ENCODE measurements at regions of chrX and their contacts with region 1.

Region 1: GRCh38 chrX:94612131-94612530 is 938.1 kb downstream of the FAM133A start:
- DNase-seq: no peak
- ATAC-seq: no peak
- H3K4me3 ChIP-seq: no peak overlapping the region
- H3K27ac ChIP-seq: no peak overlapping the region
- H3K4me1 ChIP-seq: no peaks in the 10 kb centered on the region
- H3K27me3 ChIP-seq: no peaks in the 10 kb centered on the region

Region 2: DNA sequence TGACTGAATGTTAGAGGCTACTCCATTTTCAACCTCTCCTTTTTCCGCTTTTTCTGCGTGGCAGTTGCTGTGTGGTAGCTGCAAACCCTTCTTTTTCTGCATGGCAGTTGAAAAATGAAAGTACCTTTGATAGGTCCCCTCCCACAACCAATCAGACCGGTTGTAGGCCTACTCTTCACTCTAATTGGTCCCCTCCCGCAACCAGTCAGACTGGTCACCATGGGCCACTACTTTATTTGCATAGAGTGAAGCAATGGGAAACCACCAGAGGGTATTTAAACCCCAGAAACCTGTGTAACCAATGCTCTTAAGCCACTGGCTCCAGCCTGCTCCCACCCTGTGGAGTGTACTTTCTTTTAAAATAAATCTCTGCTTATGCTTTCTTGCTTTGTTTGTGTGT is 60.3 kb before region 1 on chrX:
- intact Hi-C with region 1: no loop called
- DNase-seq: no peak
- ATAC-seq: no peak
- H3K4me3 ChIP-seq: no peak overlapping the region
- H3K27ac ChIP-seq: no peak overlapping the region
- H3K4me1 ChIP-seq: no peaks in the 10 kb centered on the region
- H3K27me3 ChIP-seq: no peaks in the 10 kb centered on the region

Region 3: DNA sequence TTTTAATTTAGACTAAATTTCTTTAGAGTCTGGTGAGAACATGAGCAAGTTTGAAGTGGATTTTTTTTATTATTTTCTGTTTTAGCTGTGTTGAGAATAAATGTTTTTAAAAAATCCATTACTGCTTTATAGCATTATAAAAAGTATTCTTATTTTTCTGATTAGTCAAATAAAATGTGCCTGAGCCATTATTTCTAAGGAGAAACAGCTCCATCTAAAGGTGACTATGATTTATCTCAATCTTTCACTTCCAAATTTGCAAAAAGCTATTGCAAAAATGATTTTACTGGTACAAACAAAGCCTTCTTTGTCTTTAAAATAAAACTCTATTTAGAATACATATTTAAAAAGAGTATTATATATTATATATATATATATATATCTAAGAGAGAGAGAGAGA is 21.1 kb after region 1 on chrX:
- intact Hi-C with region 1: loop called in 1 of 2 experiments (anchors 2 kb)
- DNase-seq: no peak
- ATAC-seq: no peak
- H3K4me3 ChIP-seq: no peak overlapping the region
- H3K27ac ChIP-seq: no peak overlapping the region
- H3K4me1 ChIP-seq: no peaks in the 10 kb centered on the region
- H3K27me3 ChIP-seq: no peaks in the 10 kb centered on the region

Measured in aorta (tissue), 5 donors.